HAP-1 (cell line): ENCODE measurements at regions of chr3 and their contacts with region 1.

Region 1: GRCh38 chr3:119891944-119892721 is 110.2 kb downstream of the NR1I2 start:
- DNase-seq: peak; percentile 61 to 66
- H3K4me3 ChIP-seq: no peak overlapping the region
- H3K4me1 ChIP-seq: no peaks in the 10 kb centered on the region
- H3K27me3 ChIP-seq: no peaks in the 10 kb centered on the region

Region 2: DNA sequence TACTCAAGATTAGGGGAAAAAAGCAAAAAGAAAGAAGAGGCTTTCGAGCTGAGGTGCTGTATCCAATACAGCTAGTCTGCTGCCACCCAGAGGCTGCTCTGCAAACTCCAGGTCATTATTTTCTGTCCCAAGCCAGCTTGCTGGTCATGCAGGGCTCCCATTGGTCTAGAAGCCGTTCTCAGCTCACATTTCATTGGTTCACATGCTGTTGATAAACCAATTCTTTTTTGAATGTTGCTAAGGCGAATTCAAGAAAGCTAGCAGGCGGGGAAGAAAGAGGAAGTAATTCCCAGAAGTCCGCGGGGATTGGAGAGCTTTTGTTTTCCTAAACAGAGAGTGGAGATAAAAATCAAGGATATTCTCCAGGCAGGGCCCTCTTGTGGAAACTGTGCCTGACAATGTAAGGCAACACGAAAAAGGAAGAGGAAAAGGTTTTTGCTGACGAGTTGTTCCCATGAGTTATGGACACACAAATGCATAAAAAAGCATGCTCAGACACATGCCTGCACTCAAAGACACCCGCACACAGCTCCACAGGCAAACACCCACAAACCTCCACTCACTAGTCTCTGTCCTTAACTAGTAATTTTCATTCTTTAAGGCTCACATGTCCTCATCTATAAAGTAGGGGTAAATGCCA is 525.3 kb after region 1 on chr3:
- in situ Hi-C with region 1: loop called (anchors 25 kb)
- DNase-seq: peak; percentile 95 to 98
- H3K4me3 ChIP-seq: 0 out of 2 replicates have a peak overlapping the region, but pooled peaks have one; percentile 1
- H3K4me1 ChIP-seq: peaks cover 11% of the 10 kb centered on the region
- H3K27me3 ChIP-seq: no peaks in the 10 kb centered on the region